ENCODE measurements at regions of chr9 and their contacts with region 1.

Region 1: GRCh38 chr9:4679268-4680172 is at the start of gene CDC37L1:
- DNase-seq: peak; percentile 98 to 100 (median 99)
- ATAC-seq: peak; percentile 98
- H3K4me3 ChIP-seq: peak within 1 kb of the TSS; percentile 72
- H3K4me3 Mint-ChIP-seq: no peak within 1 kb of the TSS
- H3K27ac ChIP-seq: peak within 1 kb of the TSS; percentile 95
- H3K27ac Mint-ChIP-seq: no peak within 1 kb of the TSS
- H3K4me1 ChIP-seq: peaks cover 15 to 19% of the 10 kb centered on the region in 2 donors
- H3K4me1 Mint-ChIP-seq: peaks cover 9 to 19% (median 17%) of the 10 kb centered on the region in 7 donors
- H3K27me3 ChIP-seq: no peaks in the 10 kb centered on the region
- H3K27me3 Mint-ChIP-seq: no peaks in the 10 kb centered on the region
- total RNA-seq, gene CDC37L1: 13.4 to 28.0 (median 22.9) TPM

Region 2: GRCh38 chr9:4515958-4516375 is 163.6 kb before region 1 on chr9:
- CTCF ChIA-PET with region 1: no interaction called
- POLR2A ChIA-PET with region 1: no interaction called
- intact Hi-C with region 1: no loop called
- DNase-seq: no peak
- ATAC-seq: no peak
- H3K4me3 ChIP-seq: no peak overlapping the region
- H3K4me3 Mint-ChIP-seq: no peak overlapping the region
- H3K27ac ChIP-seq: no peak overlapping the region
- H3K27ac Mint-ChIP-seq: peak overlapping the region in 2 of 9 donors; percentile 1 to 3
- H3K4me1 ChIP-seq: no peaks in the 10 kb centered on the region
- H3K4me1 Mint-ChIP-seq: peaks cover 0 to 12% (median 7%) of the 10 kb centered on the region in 7 donors
- H3K27me3 ChIP-seq: no peaks in the 10 kb centered on the region
- H3K27me3 Mint-ChIP-seq: peaks cover 0 to 7% (median 0%) of the 10 kb centered on the region in 5 donors

Region 3: GRCh38 chr9:4596165-4596922 is 83.2 kb before region 1 on chr9:
- CTCF ChIA-PET with region 1: interaction called, 4 read pairs
- POLR2A ChIA-PET with region 1: interaction called, 3 read pairs
- intact Hi-C with region 1: loop called in 1 of 2 experiments (anchors 1 kb)
- DNase-seq: peak in 7 of 9 donors; percentile 81 to 94 (median 91)
- ATAC-seq: peak; percentile 95
- H3K4me3 ChIP-seq: peak overlapping the region; percentile 13
- H3K4me3 Mint-ChIP-seq: peak overlapping the region; percentile 29 to 80 (median 68)
- H3K27ac ChIP-seq: peak overlapping the region; percentile 74
- H3K27ac Mint-ChIP-seq: peak overlapping the region; percentile 58 to 99 (median 97)
- H3K4me1 ChIP-seq: peaks cover 30 to 53% of the 10 kb centered on the region in 2 donors
- H3K4me1 Mint-ChIP-seq: peaks cover 32 to 76% (median 60%) of the 10 kb centered on the region in 7 donors
- H3K27me3 ChIP-seq: no peaks in the 10 kb centered on the region
- H3K27me3 Mint-ChIP-seq: peaks cover 0 to 5% (median 0%) of the 10 kb centered on the region in 5 donors

Region 4: DNA sequence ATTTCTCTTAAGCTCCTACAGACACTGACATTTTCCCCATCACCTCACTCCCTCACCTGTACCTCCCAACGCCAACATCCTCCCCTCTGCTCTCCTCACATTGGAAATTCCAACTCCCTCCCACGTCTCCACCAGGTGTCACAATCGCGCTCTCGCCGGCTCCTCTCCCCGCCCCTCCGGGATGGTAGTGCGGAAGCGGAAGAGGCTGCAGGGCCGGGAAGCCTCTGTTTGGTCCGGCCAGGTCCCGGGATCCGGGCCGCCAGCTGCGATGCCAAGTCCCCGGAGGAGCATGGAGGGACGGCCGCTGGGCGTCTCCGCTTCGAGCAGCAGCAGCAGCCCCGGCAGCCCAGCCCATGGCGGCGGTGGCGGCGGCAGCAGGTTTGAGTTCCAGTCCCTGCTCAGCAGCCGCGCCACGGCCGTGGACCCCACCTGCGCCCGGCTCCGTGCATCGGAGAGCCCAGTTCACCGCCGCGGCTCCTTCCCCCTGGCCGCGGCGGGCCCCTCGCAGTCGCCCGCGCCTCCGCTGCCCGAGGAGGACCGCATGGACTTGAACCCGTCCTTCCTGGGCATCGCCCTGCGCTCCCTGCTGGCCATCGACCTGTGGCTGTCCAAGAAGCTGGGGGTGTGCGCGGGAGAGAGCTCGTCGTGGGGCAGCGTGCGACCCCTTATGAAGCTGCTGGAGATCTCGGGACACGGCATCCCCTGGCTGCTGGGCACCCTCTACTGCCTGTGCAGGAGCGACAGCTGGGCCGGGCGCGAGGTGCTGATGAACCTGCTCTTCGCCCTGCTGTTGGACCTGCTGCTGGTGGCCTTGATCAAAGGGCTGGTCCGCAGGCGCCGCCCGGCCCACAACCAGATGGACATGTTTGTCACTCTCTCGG is 17.2 kb before region 1 on chr9 and contains the start of gene PLPP6:
- CTCF ChIA-PET with region 1: interaction called, 6 read pairs
- POLR2A ChIA-PET with region 1: interaction called, 120 read pairs
- intact Hi-C with region 1: loop called (anchors 1 kb)
- DNase-seq: peak; percentile 55 to 81 (median 76)
- ATAC-seq: peak; percentile 86
- H3K4me3 ChIP-seq: peak within 1 kb of the TSS; percentile 63
- H3K4me3 Mint-ChIP-seq: peak within 1 kb of the TSS; percentile 89 to 98 (median 96)
- H3K27ac ChIP-seq: peak within 1 kb of the TSS; percentile 78
- H3K27ac Mint-ChIP-seq: peak within 1 kb of the TSS; percentile 85 to 98 (median 95)
- H3K4me1 ChIP-seq: peaks cover 21 to 50% of the 10 kb centered on the region in 2 donors
- H3K4me1 Mint-ChIP-seq: peaks cover 41 to 80% (median 64%) of the 10 kb centered on the region in 7 donors
- H3K27me3 ChIP-seq: no peaks in the 10 kb centered on the region
- H3K27me3 Mint-ChIP-seq: peaks cover 0 to 12% (median 0%) of the 10 kb centered on the region in 5 donors
- total RNA-seq, gene PLPP6: 7.4 to 24.1 (median 10.2) TPM

Region 5: GRCh38 chr9:4740638-4741364 is 61.3 kb after region 1 on chr9 and contains the start of gene AK3:
- CTCF ChIA-PET with region 1: interaction called, 4 read pairs
- POLR2A ChIA-PET with region 1: interaction called, 14 read pairs
- intact Hi-C with region 1: loop called (anchors 1 kb)
- DNase-seq: peak; percentile 72 to 85 (median 83)
- ATAC-seq: peak; percentile 95
- H3K4me3 ChIP-seq: peak within 1 kb of the TSS; percentile 73
- H3K4me3 Mint-ChIP-seq: peak within 1 kb of the TSS; percentile 88 to 99 (median 94)
- H3K27ac ChIP-seq: peak within 1 kb of the TSS; percentile 86
- H3K27ac Mint-ChIP-seq: peak within 1 kb of the TSS; percentile 86 to 98 (median 93)
- H3K4me1 ChIP-seq: peaks cover 10 to 16% of the 10 kb centered on the region in 2 donors
- H3K4me1 Mint-ChIP-seq: peaks cover 22 to 49% (median 40%) of the 10 kb centered on the region in 7 donors
- H3K27me3 ChIP-seq: no peaks in the 10 kb centered on the region
- H3K27me3 Mint-ChIP-seq: no peaks in the 10 kb centered on the region
- total RNA-seq, gene AK3: 18.0 to 34.8 (median 25.8) TPM

Region 6: DNA sequence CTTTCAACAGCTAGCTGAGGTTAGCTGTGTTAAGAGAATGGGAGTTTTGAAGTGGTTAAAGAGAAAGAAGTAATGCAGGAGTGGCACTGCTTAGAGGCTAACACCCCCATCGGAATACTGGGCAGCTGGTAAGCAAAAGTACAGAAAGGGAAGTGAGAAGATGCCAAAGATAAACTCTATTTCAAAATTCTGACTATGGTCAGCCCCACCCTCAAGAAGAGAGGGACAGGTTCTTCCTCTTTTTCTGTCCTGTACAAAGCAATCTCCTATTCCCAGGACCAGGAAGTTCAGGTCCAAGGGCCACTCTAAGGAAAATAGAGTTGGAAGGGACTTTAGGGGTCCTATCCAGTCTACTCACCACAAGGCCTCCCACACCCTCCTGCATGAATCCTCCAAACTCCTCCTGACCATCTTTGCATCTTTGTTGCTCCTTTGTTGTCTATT is 259.6 kb after region 1 on chr9:
- CTCF ChIA-PET with region 1: no interaction called
- POLR2A ChIA-PET with region 1: no interaction called
- intact Hi-C with region 1: loop called in 1 of 2 experiments (anchors 5 kb)
- DNase-seq: peak in 2 of 9 donors; percentile 2 to 24
- ATAC-seq: peak; percentile 88
- H3K4me3 ChIP-seq: no peak overlapping the region
- H3K4me3 Mint-ChIP-seq: peak overlapping the region in 7 of 10 donors; percentile 2 to 56 (median 29)
- H3K27ac ChIP-seq: no peak overlapping the region
- H3K27ac Mint-ChIP-seq: peak overlapping the region in 4 of 9 donors; percentile 7 to 80 (median 24)
- H3K4me1 ChIP-seq: peaks cover 16 to 21% of the 10 kb centered on the region in 2 donors
- H3K4me1 Mint-ChIP-seq: peaks cover 30 to 66% (median 38%) of the 10 kb centered on the region in 7 donors
- H3K27me3 ChIP-seq: no peaks in the 10 kb centered on the region
- H3K27me3 Mint-ChIP-seq: no peaks in the 10 kb centered on the region

Region 7: DNA sequence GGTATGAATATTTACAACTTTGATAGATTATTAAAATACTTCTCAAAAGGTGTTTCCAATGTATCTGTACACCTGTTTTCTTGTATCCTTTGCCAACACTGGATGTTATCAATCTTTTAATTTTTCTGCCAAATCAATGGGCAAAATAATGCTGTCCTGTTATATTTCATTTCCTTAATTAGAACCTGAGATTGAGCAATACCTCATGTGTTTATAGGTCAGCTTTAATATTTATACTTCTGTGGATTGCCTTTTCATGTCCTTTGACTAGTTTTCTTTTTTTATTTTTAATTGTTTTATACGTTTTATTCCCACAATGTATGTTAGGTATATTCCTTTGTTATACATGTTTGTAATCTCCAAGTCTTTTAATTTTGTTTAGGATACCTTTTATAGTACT is 383.1 kb after region 1 on chr9:
- CTCF ChIA-PET with region 1: no interaction called
- POLR2A ChIA-PET with region 1: no interaction called
- intact Hi-C with region 1: no loop called
- DNase-seq: no peak
- ATAC-seq: no peak
- H3K4me3 ChIP-seq: no peak overlapping the region
- H3K4me3 Mint-ChIP-seq: no peak overlapping the region
- H3K27ac ChIP-seq: no peak overlapping the region
- H3K27ac Mint-ChIP-seq: no peak overlapping the region
- H3K4me1 ChIP-seq: no peaks in the 10 kb centered on the region
- H3K4me1 Mint-ChIP-seq: peaks cover 0 to 24% (median 0%) of the 10 kb centered on the region in 7 donors
- H3K27me3 ChIP-seq: no peaks in the 10 kb centered on the region
- H3K27me3 Mint-ChIP-seq: no peaks in the 10 kb centered on the region

Region 8: GRCh38 chr9:6015278-6016157 is 1336.0 kb after region 1 on chr9 and contains the start of gene RANBP6:
- CTCF ChIA-PET with region 1: no interaction called
- POLR2A ChIA-PET with region 1: no interaction called
- intact Hi-C with region 1: loop called in 1 of 2 experiments (anchors 2 kb)
- DNase-seq: peak; percentile 81 to 92 (median 91)
- ATAC-seq: peak; percentile 100
- H3K4me3 ChIP-seq: peak within 1 kb of the TSS; percentile 65
- H3K4me3 Mint-ChIP-seq: peak within 1 kb of the TSS; percentile 91 to 99 (median 96)
- H3K27ac ChIP-seq: peak within 1 kb of the TSS; percentile 75
- H3K27ac Mint-ChIP-seq: peak within 1 kb of the TSS; percentile 91 to 100 (median 99)
- H3K4me1 ChIP-seq: peaks cover 8 to 11% of the 10 kb centered on the region in 2 donors
- H3K4me1 Mint-ChIP-seq: peaks cover 13 to 49% (median 38%) of the 10 kb centered on the region in 7 donors
- H3K27me3 ChIP-seq: no peaks in the 10 kb centered on the region
- H3K27me3 Mint-ChIP-seq: no peaks in the 10 kb centered on the region
- total RNA-seq, gene RANBP6: 21.9 to 34.3 (median 30.3) TPM